ENCODE measurements at regions of chr11 and their contacts with region 1.

Region 1: GRCh38 chr11:128595221-128595620 is 7.9 kb upstream of the ETS1 start:
- DNase-seq: no peak
- ATAC-seq: no peak
- H3K4me3 ChIP-seq: no peak overlapping the region
- H3K4me3 Mint-ChIP-seq: no peak overlapping the region
- H3K27ac ChIP-seq: no peak overlapping the region
- H3K27ac Mint-ChIP-seq: no peak overlapping the region
- H3K4me1 ChIP-seq: peaks cover 5% of the 10 kb centered on the region
- H3K4me1 Mint-ChIP-seq: peaks cover 12% of the 10 kb centered on the region
- H3K27me3 ChIP-seq: no peaks in the 10 kb centered on the region
- H3K27me3 Mint-ChIP-seq: no peaks in the 10 kb centered on the region
- CTCF ChIP-seq: no peak

Region 2: GRCh38 chr11:128579798-128580504 is 15.3 kb before region 1 on chr11:
- CTCF ChIA-PET with region 1: interaction called, 3 read pairs
- POLR2A ChIA-PET with region 1: interaction called, 5 read pairs
- intact Hi-C with region 1: loop called in 1 of 2 experiments (anchors 2 kb)
- DNase-seq: peak in 2 of 9 experiments; percentile 13 to 37
- ATAC-seq: peak; percentile 69
- H3K4me3 ChIP-seq: no peak overlapping the region
- H3K4me3 Mint-ChIP-seq: no peak overlapping the region
- H3K27ac ChIP-seq: no peak overlapping the region
- H3K27ac Mint-ChIP-seq: no peak overlapping the region
- H3K4me1 ChIP-seq: peaks cover 33% of the 10 kb centered on the region
- H3K4me1 Mint-ChIP-seq: peaks cover 62% of the 10 kb centered on the region
- H3K27me3 ChIP-seq: no peaks in the 10 kb centered on the region
- H3K27me3 Mint-ChIP-seq: no peaks in the 10 kb centered on the region
- CTCF ChIP-seq: no peak

Measured in CD8-positive, alpha-beta T cell (primary cell).